Naive thymus-derived CD4-positive, alpha-beta T cell (primary cell): ENCODE measurements at regions of chr7 and their contacts with region 1.

Region 1: DNA sequence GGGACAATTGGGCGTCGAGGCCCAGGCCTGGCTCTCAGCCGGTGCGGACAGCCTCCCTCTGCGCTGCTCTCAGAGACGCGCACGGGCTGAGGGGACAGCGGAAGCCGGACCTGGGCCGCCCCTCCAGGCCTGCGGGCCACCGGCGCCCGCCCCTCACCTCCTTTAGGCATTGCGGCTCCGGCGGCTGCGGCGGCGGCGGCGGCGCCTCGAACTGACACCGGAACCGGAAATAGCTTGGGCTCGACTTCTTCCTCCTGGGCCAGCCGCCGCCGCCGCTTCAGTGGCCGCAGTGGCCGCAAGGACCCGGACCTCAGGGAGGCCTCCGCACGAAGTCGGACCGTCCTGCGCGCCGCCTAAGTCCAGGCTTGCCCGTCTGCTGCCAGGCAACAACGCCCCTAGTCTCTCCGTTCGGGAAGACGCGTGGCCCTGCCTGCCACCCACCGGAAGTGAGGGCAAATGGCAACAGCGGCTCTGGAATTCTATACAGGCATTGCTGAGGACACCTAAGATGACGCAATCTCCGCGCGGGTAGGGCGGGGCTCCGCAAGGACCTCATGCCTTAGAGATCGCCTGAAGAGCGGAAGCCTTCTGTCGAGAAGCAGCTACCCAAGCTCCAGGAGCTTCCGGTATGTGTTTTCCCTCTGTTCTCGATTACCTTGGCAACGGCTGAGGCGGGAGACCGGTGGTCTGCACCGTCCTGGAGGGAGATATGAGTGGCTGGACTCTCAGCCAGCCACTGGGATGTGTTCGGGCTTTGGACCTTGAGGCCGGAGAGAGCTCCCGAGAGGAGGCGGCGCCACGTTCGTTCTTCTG is at the starts of genes BUD31 and PDAP1:
- DNase-seq: peak; percentile 92 to 100 (median 98)
- ATAC-seq: peak; percentile 96
- H3K4me3 ChIP-seq: peak within 1 kb of the TSS; percentile 89
- H3K4me3 Mint-ChIP-seq: peak within 1 kb of the TSS; percentile 91 to 98 (median 96)
- H3K27ac ChIP-seq: peak within 1 kb of the TSS; percentile 93
- H3K27ac Mint-ChIP-seq: peak within 1 kb of the TSS; percentile 94 to 98 (median 97)
- H3K4me1 ChIP-seq: peaks cover 26 to 37% of the 10 kb centered on the region in 2 donors
- H3K4me1 Mint-ChIP-seq: peaks cover 37 to 67% (median 50%) of the 10 kb centered on the region in 7 donors
- H3K27me3 ChIP-seq: no peaks in the 10 kb centered on the region
- H3K27me3 Mint-ChIP-seq: no peaks in the 10 kb centered on the region
- total RNA-seq, gene BUD31: 55.2 to 134 (median 83.9) TPM
- total RNA-seq, gene PDAP1: 42.8 to 104 (median 64.0) TPM

Region 2: GRCh38 chr7:99143853-99144672 is 264.5 kb before region 1 on chr7 and contains the start of gene SMURF1:
- CTCF ChIA-PET with region 1: no interaction called
- POLR2A ChIA-PET with region 1: interaction called, 4 read pairs
- intact Hi-C with region 1: loop called in 1 of 2 experiments (anchors 5 kb)
- DNase-seq: peak; percentile 50 to 89 (median 80)
- ATAC-seq: peak; percentile 84
- H3K4me3 ChIP-seq: peak within 1 kb of the TSS; percentile 94
- H3K4me3 Mint-ChIP-seq: peak within 1 kb of the TSS; percentile 93 to 99 (median 96)
- H3K27ac ChIP-seq: peak within 1 kb of the TSS; percentile 90
- H3K27ac Mint-ChIP-seq: peak within 1 kb of the TSS; percentile 88 to 98 (median 96)
- H3K4me1 ChIP-seq: peaks cover 5 to 14% of the 10 kb centered on the region in 2 donors
- H3K4me1 Mint-ChIP-seq: peaks cover 30 to 49% (median 39%) of the 10 kb centered on the region in 7 donors
- H3K27me3 ChIP-seq: no peaks in the 10 kb centered on the region
- H3K27me3 Mint-ChIP-seq: peaks cover 0 to 7% (median 5%) of the 10 kb centered on the region in 5 donors
- total RNA-seq, gene SMURF1: 14.6 to 26.4 (median 20.8) TPM

Region 3: DNA sequence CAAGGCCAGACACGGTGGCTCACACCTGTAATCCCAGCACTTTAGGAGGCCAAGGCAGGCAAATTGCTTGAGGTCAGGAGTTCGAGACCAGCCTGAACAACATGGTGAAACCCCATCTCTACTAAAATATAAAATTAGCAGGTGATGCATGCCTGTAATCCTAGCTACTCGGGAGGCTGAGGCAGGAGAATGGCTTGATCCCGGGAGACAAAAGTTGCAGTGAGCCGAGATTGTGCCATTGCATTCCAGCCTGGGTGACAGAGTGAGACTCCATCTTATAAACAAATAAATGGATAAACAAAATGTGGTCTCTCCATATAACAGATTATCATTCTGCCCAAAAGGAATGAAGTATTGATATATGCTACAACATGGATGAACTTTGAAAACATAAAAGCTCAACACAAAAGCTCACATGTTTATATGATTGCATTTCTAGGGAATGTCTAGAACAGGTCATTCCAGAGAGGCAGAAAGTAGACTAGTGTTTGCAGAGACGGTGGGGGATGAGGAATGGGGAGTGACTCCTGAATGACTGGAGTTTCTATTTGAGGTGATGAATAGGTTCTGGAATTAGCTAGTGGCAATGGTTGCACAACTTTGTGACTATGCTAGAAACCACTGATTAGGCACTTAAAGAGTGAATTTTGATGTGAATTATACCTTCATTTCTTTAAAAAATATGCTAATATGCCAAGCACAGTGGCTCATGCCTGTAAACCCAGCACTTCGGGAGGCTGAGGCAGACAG is 207.7 kb before region 1 on chr7:
- CTCF ChIA-PET with region 1: no interaction called
- POLR2A ChIA-PET with region 1: no interaction called
- intact Hi-C with region 1: no loop called
- DNase-seq: no peak
- ATAC-seq: no peak
- H3K4me3 ChIP-seq: no peak overlapping the region
- H3K4me3 Mint-ChIP-seq: no peak overlapping the region
- H3K27ac ChIP-seq: no peak overlapping the region
- H3K27ac Mint-ChIP-seq: no peak overlapping the region
- H3K4me1 ChIP-seq: no peaks in the 10 kb centered on the region
- H3K4me1 Mint-ChIP-seq: no peaks in the 10 kb centered on the region
- H3K27me3 ChIP-seq: no peaks in the 10 kb centered on the region
- H3K27me3 Mint-ChIP-seq: peaks cover 0 to 13% (median 4%) of the 10 kb centered on the region in 5 donors

Region 4: GRCh38 chr7:99374103-99375064 is 34.2 kb before region 1 on chr7 and contains the start of gene ARPC1B:
- CTCF ChIA-PET with region 1: no interaction called
- POLR2A ChIA-PET with region 1: interaction called, 62 read pairs
- intact Hi-C with region 1: loop called (anchors 1 to 5 kb)
- DNase-seq: peak; percentile 67 to 86 (median 76)
- ATAC-seq: peak; percentile 82
- H3K4me3 ChIP-seq: peak within 1 kb of the TSS; percentile 83
- H3K4me3 Mint-ChIP-seq: peak within 1 kb of the TSS; percentile 71 to 90 (median 82)
- H3K27ac ChIP-seq: peak within 1 kb of the TSS; percentile 95
- H3K27ac Mint-ChIP-seq: peak within 1 kb of the TSS; percentile 76 to 99 (median 94)
- H3K4me1 ChIP-seq: peaks cover 18 to 35% of the 10 kb centered on the region in 2 donors
- H3K4me1 Mint-ChIP-seq: peaks cover 6 to 36% (median 32%) of the 10 kb centered on the region in 7 donors
- H3K27me3 ChIP-seq: no peaks in the 10 kb centered on the region
- H3K27me3 Mint-ChIP-seq: no peaks in the 10 kb centered on the region
- total RNA-seq, gene ARPC1B: 88.1 to 364 (median 141) TPM

Region 5: DNA sequence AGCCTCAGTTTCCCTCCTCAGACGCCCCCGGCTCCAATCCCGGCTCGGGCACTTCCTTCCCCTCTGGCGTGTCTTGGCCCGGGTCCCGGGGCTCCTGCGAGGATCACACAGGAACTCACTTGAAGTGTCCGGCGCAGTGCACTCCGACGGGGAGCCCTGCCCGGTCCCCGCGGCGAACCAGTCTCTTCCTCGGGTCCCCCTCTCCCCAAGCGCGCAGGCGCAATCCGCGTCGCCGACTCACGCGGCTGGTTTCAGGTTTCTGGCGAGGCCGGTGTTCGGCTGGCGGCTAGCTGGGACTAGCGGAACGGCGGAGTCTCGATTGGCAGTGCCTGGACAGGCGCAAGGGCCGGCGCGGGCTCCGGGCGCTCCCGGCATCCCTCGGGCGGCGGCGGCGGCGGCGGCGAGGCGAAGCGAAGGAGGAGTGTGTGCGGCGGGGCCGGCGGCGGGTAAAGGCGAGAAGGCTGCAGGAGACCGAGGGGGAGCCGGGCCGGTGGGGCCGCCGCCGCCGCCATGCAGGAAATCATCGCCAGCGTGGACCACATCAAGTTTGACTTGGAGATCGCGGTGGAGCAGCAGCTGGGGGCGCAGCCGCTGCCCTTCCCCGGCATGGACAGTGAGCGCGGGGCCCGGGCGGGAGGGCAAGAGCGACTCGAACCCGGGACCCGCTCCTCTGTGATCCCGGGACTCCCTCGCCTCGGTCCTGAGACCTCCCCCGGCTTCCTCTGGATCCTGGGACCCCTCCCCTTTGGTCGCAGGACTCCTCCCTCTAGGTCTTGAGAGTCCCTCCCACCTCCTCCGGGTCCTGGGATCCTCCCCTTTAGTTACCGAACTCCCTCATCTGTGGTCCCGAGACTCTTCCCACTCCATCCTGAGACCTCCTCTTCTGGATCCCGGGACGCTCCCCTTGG is 30.2 kb after region 1 on chr7 and contains the starts of genes CPSF4 and PTCD1:
- CTCF ChIA-PET with region 1: interaction called, 3 read pairs
- POLR2A ChIA-PET with region 1: interaction called, 12 read pairs
- intact Hi-C with region 1: loop called (anchors 1 kb)
- DNase-seq: peak; percentile 71 to 92 (median 77)
- ATAC-seq: peak; percentile 95
- H3K4me3 ChIP-seq: peak within 1 kb of the TSS; percentile 93
- H3K4me3 Mint-ChIP-seq: peak within 1 kb of the TSS; percentile 92 to 100 (median 98)
- H3K27ac ChIP-seq: peak within 1 kb of the TSS; percentile 81
- H3K27ac Mint-ChIP-seq: peak within 1 kb of the TSS; percentile 85 to 95 (median 94)
- H3K4me1 ChIP-seq: peaks cover 10 to 11% of the 10 kb centered on the region in 2 donors
- H3K4me1 Mint-ChIP-seq: peaks cover 18 to 40% (median 31%) of the 10 kb centered on the region in 7 donors
- H3K27me3 ChIP-seq: no peaks in the 10 kb centered on the region
- H3K27me3 Mint-ChIP-seq: no peaks in the 10 kb centered on the region
- total RNA-seq, gene CPSF4: 36.3 to 69.4 (median 45.7) TPM
- total RNA-seq, gene PTCD1: 4.0 to 10.8 (median 8.8) TPM

Region 6: GRCh38 chr7:99504603-99505323 is 96.2 kb after region 1 on chr7 and contains the start of gene ZKSCAN5:
- CTCF ChIA-PET with region 1: no interaction called
- POLR2A ChIA-PET with region 1: interaction called, 30 read pairs
- intact Hi-C with region 1: loop called (anchors 1 kb)
- DNase-seq: peak; percentile 93 to 98 (median 97)
- ATAC-seq: peak; percentile 93
- H3K4me3 ChIP-seq: peak within 1 kb of the TSS; percentile 98
- H3K4me3 Mint-ChIP-seq: peak within 1 kb of the TSS; percentile 84 to 100 (median 96)
- H3K27ac ChIP-seq: peak within 1 kb of the TSS; percentile 88
- H3K27ac Mint-ChIP-seq: peak within 1 kb of the TSS; percentile 68 to 99 (median 97)
- H3K4me1 ChIP-seq: peaks cover 13 to 27% of the 10 kb centered on the region in 2 donors
- H3K4me1 Mint-ChIP-seq: peaks cover 20 to 41% (median 30%) of the 10 kb centered on the region in 7 donors
- H3K27me3 ChIP-seq: no peaks in the 10 kb centered on the region
- H3K27me3 Mint-ChIP-seq: no peaks in the 10 kb centered on the region
- total RNA-seq, gene ZKSCAN5: 4.7 to 11.0 (median 8.3) TPM

Region 7: DNA sequence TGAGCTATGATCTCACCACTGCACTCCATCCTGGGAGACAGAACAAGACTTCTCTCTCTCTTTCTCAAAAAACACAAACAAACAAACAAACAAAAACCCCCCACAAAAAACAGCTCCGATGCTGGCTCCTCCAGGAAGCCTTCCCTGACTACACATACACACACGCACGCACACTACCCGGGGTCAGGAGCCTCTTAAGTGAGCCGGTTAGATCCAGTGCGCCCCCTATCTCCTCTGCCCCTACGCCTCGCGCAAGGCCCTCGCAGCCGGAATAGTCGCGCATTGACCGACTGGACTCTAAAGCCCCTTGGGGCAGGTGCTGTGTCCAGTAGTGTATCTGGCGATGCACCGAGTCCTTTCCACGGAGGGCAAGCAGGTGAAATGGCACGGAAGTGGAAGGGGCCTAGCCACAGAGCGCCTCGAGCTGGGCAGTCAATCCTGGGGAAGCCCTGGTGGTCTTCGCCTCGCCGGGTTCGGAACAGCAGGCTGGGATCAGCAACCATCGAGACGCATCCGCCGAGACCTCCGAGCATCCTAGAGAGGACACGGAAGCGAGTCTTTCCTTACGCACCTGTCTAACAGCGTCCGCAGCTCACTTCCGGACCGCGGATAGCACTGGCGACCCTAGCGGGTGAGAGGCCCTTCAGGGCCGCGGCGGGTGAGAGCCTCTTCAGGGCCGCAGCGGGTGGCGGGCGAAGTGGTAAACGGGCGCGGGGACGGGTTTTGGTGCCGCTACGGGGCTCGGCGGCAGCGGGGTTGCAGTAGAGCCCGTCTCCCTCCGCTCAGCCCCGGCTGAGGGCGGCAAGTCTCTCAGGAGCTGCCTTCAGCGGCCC is 208.0 kb after region 1 on chr7 and contains the start of gene ZSCAN25:
- CTCF ChIA-PET with region 1: no interaction called
- POLR2A ChIA-PET with region 1: interaction called, 6 read pairs
- intact Hi-C with region 1: loop called (anchors 2 kb)
- DNase-seq: peak; percentile 65 to 88 (median 85)
- ATAC-seq: peak; percentile 99
- H3K4me3 ChIP-seq: peak within 1 kb of the TSS; percentile 83
- H3K4me3 Mint-ChIP-seq: peak within 1 kb of the TSS; percentile 94 to 99 (median 98)
- H3K27ac ChIP-seq: peak within 1 kb of the TSS; percentile 90
- H3K27ac Mint-ChIP-seq: peak within 1 kb of the TSS; percentile 88 to 99 (median 97)
- H3K4me1 ChIP-seq: peaks cover 12 to 14% of the 10 kb centered on the region in 2 donors
- H3K4me1 Mint-ChIP-seq: peaks cover 30 to 55% (median 48%) of the 10 kb centered on the region in 7 donors
- H3K27me3 ChIP-seq: no peaks in the 10 kb centered on the region
- H3K27me3 Mint-ChIP-seq: peaks cover 0 to 4% (median 0%) of the 10 kb centered on the region in 5 donors
- total RNA-seq, gene ZSCAN25: 33.9 to 51.6 (median 43.8) TPM

Region 8: GRCh38 chr7:100081535-100082102 is 673.0 kb after region 1 on chr7 and contains the start of gene ZNF3:
- CTCF ChIA-PET with region 1: no interaction called
- POLR2A ChIA-PET with region 1: no interaction called
- intact Hi-C with region 1: loop called (anchors 2 to 10 kb)
- DNase-seq: peak; percentile 87 to 98 (median 97)
- ATAC-seq: peak; percentile 94
- H3K4me3 ChIP-seq: peak within 1 kb of the TSS; percentile 78
- H3K4me3 Mint-ChIP-seq: peak within 1 kb of the TSS; percentile 89 to 96 (median 92)
- H3K27ac ChIP-seq: peak within 1 kb of the TSS; percentile 82
- H3K27ac Mint-ChIP-seq: peak within 1 kb of the TSS; percentile 64 to 98 (median 91)
- H3K4me1 ChIP-seq: peaks cover 5 to 18% of the 10 kb centered on the region in 2 donors
- H3K4me1 Mint-ChIP-seq: peaks cover 26 to 46% (median 41%) of the 10 kb centered on the region in 7 donors
- H3K27me3 ChIP-seq: no peaks in the 10 kb centered on the region
- H3K27me3 Mint-ChIP-seq: peaks cover 0 to 19% (median 0%) of the 10 kb centered on the region in 5 donors
- total RNA-seq, gene ZNF3: 29.1 to 48.0 (median 35.0) TPM